MCF 10A (cell line): ENCODE measurements at regions of chr5 and their contacts with region 1.

Region 1: GRCh38 chr5:172902497-172903200 is 56.6 kb upstream of the RPL26L1 start:
- DNase-seq: peak; percentile 75
- H3K4me3 Mint-ChIP-seq: peak overlapping the region; percentile 45
- H3K27ac Mint-ChIP-seq: peak overlapping the region; percentile 98
- H3K4me1 Mint-ChIP-seq: peaks cover 82% of the 10 kb centered on the region
- H3K27me3 Mint-ChIP-seq: no peaks in the 10 kb centered on the region
- CTCF ChIP-seq: peak; percentile 27

Region 2: GRCh38 chr5:172758083-172758833 is 144.4 kb before region 1 on chr5:
- CTCF ChIA-PET with region 1: interaction called, 4 read pairs
- POLR2A ChIA-PET with region 1: interaction called, 10 read pairs
- intact Hi-C with region 1: no loop called
- DNase-seq: peak; percentile 98
- H3K4me3 Mint-ChIP-seq: no peak overlapping the region
- H3K27ac Mint-ChIP-seq: peak overlapping the region; percentile 76
- H3K4me1 Mint-ChIP-seq: peaks cover 12% of the 10 kb centered on the region
- H3K27me3 Mint-ChIP-seq: no peaks in the 10 kb centered on the region
- CTCF ChIP-seq: no peak

Region 3: DNA sequence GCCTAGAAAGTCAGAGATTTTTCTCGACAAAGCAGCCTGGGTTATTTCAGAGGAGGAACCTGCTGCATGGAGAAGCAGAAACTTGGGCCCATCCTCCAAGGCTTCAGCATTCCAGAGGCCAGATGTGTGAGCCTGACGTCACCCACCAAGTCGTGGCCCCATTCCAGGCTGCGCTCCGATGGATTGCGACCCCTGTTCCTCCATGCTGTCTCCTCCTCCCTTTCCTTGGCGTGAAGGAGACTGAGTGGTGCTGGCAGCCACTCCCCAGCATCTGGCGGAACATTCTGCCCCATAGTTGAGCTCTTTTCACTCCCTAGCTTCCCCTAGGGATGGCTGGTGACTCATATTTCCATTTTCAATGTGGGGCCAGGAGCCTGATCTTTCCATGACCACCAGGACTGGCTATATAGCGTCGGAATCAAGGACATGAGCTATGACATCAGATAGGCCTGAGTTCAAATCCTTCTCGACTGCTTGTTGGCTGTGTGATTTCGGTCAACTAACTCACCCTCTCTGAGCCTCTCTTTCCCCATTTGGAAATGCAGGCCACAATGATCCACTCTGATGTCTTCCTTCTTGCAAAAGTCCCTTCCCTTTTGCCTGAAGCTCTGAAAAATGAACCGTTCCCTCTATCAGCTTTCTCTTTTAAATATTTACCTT is 107.2 kb before region 1 on chr5:
- CTCF ChIA-PET with region 1: interaction called, 4 read pairs
- POLR2A ChIA-PET with region 1: interaction called, 49 read pairs
- intact Hi-C with region 1: no loop called
- DNase-seq: peak; percentile 96
- H3K4me3 Mint-ChIP-seq: peak overlapping the region; percentile 21
- H3K27ac Mint-ChIP-seq: peak overlapping the region; percentile 79
- H3K4me1 Mint-ChIP-seq: peaks cover 50% of the 10 kb centered on the region
- H3K27me3 Mint-ChIP-seq: no peaks in the 10 kb centered on the region
- CTCF ChIP-seq: no peak

Region 4: GRCh38 chr5:172833686-172834414 is 68.8 kb before region 1 on chr5 and contains the start of gene ERGIC1:
- CTCF ChIA-PET with region 1: no interaction called
- POLR2A ChIA-PET with region 1: interaction called, 21 read pairs
- intact Hi-C with region 1: no loop called
- DNase-seq: peak; percentile 91
- H3K4me3 Mint-ChIP-seq: peak within 1 kb of the TSS; percentile 87
- H3K27ac Mint-ChIP-seq: peak within 1 kb of the TSS; percentile 88
- H3K4me1 Mint-ChIP-seq: peaks cover 40% of the 10 kb centered on the region
- H3K27me3 Mint-ChIP-seq: no peaks in the 10 kb centered on the region
- CTCF ChIP-seq: peak; percentile 26
- total RNA-seq, gene ERGIC1: 257 and 292 TPM in 2 replicates

Region 5: GRCh38 chr5:172868924-172869591 is 33.6 kb before region 1 on chr5:
- CTCF ChIA-PET with region 1: interaction called, 26 read pairs
- POLR2A ChIA-PET with region 1: interaction called, 343 read pairs
- intact Hi-C with region 1: loop called (anchors 5 kb)
- DNase-seq: peak; percentile 99
- H3K4me3 Mint-ChIP-seq: no peak overlapping the region
- H3K27ac Mint-ChIP-seq: no peak overlapping the region
- H3K4me1 Mint-ChIP-seq: peaks cover 15% of the 10 kb centered on the region
- H3K27me3 Mint-ChIP-seq: no peaks in the 10 kb centered on the region
- CTCF ChIP-seq: no peak

Region 6: GRCh38 chr5:172932313-172933017 is 29.8 kb after region 1 on chr5:
- CTCF ChIA-PET with region 1: interaction called, 28 read pairs
- POLR2A ChIA-PET with region 1: interaction called, 29 read pairs
- intact Hi-C with region 1: loop called (anchors 2 kb)
- DNase-seq: peak; percentile 82
- H3K4me3 Mint-ChIP-seq: peak overlapping the region; percentile 28
- H3K27ac Mint-ChIP-seq: peak overlapping the region; percentile 90
- H3K4me1 Mint-ChIP-seq: peaks cover 28% of the 10 kb centered on the region
- H3K27me3 Mint-ChIP-seq: no peaks in the 10 kb centered on the region
- CTCF ChIP-seq: peak; percentile 100